ENCODE measurements at regions of chr9 and their contacts with region 1.

Region 1: GRCh38 chr9:36407122-36407723 is 7.2 kb upstream of the RNF38 start:
- DNase-seq: no peak
- H3K4me3 ChIP-seq: no peak overlapping the region
- H3K27ac ChIP-seq: peak overlapping the region; percentile 18
- H3K4me1 ChIP-seq: peaks cover 10% of the 10 kb centered on the region
- H3K27me3 ChIP-seq: no peaks in the 10 kb centered on the region
- CTCF ChIP-seq: peak; percentile 96

Region 2: DNA sequence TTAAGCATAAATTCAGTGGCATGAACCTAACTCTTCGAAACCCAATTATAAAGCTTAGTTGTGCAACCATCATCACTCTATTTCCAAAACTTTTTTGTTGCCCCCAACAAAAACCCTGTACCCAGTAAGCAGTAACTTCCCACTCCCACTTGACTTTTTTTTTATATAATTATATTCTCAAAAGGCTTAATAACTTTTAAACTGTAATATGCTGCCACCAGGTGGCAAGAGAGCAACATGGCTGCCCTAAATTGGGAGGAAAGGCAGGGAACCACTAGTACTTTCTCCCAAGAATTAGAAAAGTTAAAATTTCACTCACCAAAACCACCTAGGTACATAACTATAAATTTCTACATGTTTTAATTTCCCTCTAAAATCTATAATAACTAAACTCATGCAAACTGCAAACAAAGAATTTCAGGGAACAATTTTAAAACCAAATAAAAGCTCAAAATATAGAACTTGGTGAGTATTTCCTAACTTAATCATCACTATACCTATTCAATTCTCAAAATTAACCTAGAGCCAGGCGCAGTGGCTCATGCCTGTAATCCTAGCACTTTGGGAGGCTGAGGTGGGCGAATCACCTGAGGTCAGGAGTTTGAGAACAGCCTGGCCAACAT is 43.0 kb after region 1 on chr9:
- intact Hi-C with region 1: loop called (anchors 5 kb)
- DNase-seq: no peak
- H3K4me3 ChIP-seq: no peak overlapping the region
- H3K27ac ChIP-seq: no peak overlapping the region
- H3K4me1 ChIP-seq: peaks cover 25% of the 10 kb centered on the region
- H3K27me3 ChIP-seq: no peaks in the 10 kb centered on the region
- CTCF ChIP-seq: peak; percentile 77

Region 3: DNA sequence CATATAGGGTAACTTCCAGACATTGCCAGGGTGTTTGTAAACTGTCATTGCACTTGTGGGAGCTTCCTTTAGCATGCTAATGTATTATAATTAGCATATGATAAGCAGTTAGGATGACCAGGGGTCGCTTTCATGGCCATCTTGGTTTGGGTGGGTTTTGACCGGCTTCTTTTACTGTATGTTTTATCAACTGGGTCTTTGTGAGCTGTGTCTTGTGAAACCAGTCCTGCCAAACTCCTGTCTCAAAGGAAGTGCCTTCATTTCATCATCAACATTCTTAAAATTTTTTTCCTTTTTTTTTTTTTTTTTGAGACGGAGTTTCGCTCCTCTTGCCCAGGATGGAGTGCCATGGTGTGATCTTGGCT is 153.6 kb after region 1 on chr9:
- intact Hi-C with region 1: loop called (anchors 2 kb)
- DNase-seq: no peak
- H3K4me3 ChIP-seq: no peak overlapping the region
- H3K27ac ChIP-seq: no peak overlapping the region
- H3K4me1 ChIP-seq: no peaks in the 10 kb centered on the region
- H3K27me3 ChIP-seq: no peaks in the 10 kb centered on the region
- CTCF ChIP-seq: no peak

Region 4: DNA sequence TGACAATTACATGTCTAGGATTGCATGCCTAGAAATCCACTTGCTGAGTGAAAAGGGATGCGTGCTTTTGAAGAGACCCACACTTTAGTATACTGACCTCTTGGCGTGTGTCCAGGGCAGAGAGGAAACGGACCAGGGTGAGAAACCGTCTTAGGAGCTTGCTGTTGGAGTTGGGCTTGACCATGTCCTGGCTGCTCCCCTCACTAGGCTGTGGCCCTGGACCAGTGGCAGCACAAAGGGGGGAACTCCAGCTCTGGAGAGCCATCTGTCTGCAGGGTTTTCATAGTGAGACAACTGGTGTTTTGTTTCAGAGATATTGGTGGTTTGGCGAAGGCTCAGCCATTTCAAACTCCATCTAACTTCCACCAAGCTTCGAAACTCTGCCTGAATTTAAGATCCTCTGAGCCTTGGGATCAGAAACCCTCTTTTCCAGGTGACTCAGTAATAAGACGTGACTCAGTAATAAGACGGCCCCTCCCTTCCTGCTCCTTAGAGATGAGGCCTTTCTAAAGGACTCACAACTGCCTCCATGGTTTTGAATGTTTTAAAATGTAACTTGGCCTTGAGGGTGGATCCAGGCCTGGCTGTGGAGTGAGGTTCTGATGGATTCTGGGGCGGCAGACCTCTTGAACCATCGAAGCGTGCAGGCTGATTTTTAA is 331.2 kb after region 1 on chr9:
- intact Hi-C with region 1: no loop called
- DNase-seq: no peak
- H3K4me3 ChIP-seq: no peak overlapping the region
- H3K27ac ChIP-seq: no peak overlapping the region
- H3K4me1 ChIP-seq: peaks cover 6% of the 10 kb centered on the region
- H3K27me3 ChIP-seq: peaks cover 100% of the 10 kb centered on the region
- CTCF ChIP-seq: no peak

Measured in left ventricle myocardium inferior (tissue), 1 donor.